ENCODE measurements at regions of chr1 and their contacts with region 1.

Region 1: GRCh38 chr1:205485338-205486228 is 18.9 kb upstream of the CDK18 start:
- DNase-seq: peak; percentile 52 to 85 (median 71)
- H3K4me3 ChIP-seq: no peak overlapping the region
- H3K4me3 Mint-ChIP-seq: peak overlapping the region in 1 of 7 donors; percentile 4
- H3K27ac ChIP-seq: no peak overlapping the region
- H3K27ac Mint-ChIP-seq: peak overlapping the region in 4 of 8 donors; percentile 44 to 80 (median 48)
- H3K4me1 ChIP-seq: peaks cover 22% of the 10 kb centered on the region
- H3K4me1 Mint-ChIP-seq: peaks cover 44 to 50% (median 49%) of the 10 kb centered on the region in 3 donors
- H3K27me3 ChIP-seq: no peaks in the 10 kb centered on the region
- H3K27me3 Mint-ChIP-seq: peaks cover 2 to 17% of the 10 kb centered on the region in 2 donors

Region 2: DNA sequence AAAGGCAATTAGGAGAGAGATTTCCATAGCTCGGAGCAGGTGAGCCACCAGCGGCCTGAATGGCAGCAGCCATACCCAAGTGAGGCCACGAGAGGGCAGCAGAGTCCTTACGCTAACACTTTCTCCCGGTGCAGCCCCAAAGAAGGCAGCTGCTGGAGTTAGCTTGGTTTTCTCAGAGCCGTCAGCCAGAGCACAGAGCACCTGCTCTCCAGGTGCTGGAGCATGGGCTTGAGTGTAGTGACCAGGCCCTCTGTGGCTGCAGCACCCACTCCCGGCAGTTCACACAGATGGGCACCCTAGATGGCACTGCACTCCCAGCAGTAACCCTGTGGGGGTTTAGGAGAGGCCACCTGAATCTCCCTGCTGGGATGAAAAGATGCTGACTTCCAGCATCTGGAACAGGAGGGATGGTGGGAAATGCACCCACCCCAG is 212.0 kb before region 1 on chr1:
- CTCF ChIA-PET with region 1: interaction called, 12 read pairs
- POLR2A ChIA-PET with region 1: no interaction called
- DNase-seq: peak; percentile 74 to 87 (median 76)
- H3K4me3 ChIP-seq: peak overlapping the region; percentile 33
- H3K4me3 Mint-ChIP-seq: peak overlapping the region; percentile 33 to 79 (median 56)
- H3K27ac ChIP-seq: no peak overlapping the region
- H3K27ac Mint-ChIP-seq: peak overlapping the region in 5 of 8 donors; percentile 14 to 75 (median 71)
- H3K4me1 ChIP-seq: peaks cover 40% of the 10 kb centered on the region
- H3K4me1 Mint-ChIP-seq: peaks cover 23 to 45% (median 31%) of the 10 kb centered on the region in 3 donors
- H3K27me3 ChIP-seq: no peaks in the 10 kb centered on the region
- H3K27me3 Mint-ChIP-seq: peaks cover 0 to 2% of the 10 kb centered on the region in 2 donors

Region 3: DNA sequence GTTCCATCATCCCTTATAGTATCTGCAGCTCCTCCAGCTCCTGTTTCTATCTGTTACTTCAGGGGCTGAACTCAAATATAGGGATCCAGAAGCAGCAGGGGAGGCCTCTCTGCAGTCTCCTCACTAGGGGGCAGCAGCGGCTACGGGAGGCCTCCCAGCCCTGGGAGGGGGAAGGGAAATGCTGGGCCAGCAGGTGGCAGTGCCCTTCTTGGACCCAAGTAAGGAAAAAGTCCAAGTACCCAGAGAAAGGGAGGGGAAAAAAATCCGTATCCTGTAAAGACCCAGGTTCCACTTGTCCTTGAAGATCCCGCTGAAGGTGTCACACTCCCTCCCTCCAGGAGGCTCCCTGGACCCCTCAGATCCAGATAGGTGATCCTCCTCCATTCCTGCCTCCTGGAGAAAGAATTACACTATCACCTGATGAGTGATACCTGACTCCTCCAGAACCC is 149.9 kb before region 1 on chr1:
- CTCF ChIA-PET with region 1: interaction called, 22 read pairs
- POLR2A ChIA-PET with region 1: no interaction called
- DNase-seq: peak; percentile 63 to 83 (median 64)
- H3K4me3 ChIP-seq: no peak overlapping the region
- H3K4me3 Mint-ChIP-seq: no peak overlapping the region
- H3K27ac ChIP-seq: no peak overlapping the region
- H3K27ac Mint-ChIP-seq: no peak overlapping the region
- H3K4me1 ChIP-seq: no peaks in the 10 kb centered on the region
- H3K4me1 Mint-ChIP-seq: peaks cover 0 to 2% (median 0%) of the 10 kb centered on the region in 3 donors
- H3K27me3 ChIP-seq: no peaks in the 10 kb centered on the region
- H3K27me3 Mint-ChIP-seq: peaks cover 0 to 10% of the 10 kb centered on the region in 2 donors

Region 4: GRCh38 chr1:205387845-205388244 is 97.7 kb before region 1 on chr1:
- CTCF ChIA-PET with region 1: interaction called, 12 read pairs
- POLR2A ChIA-PET with region 1: no interaction called
- DNase-seq: no peak
- H3K4me3 ChIP-seq: no peak overlapping the region
- H3K4me3 Mint-ChIP-seq: no peak overlapping the region
- H3K27ac ChIP-seq: no peak overlapping the region
- H3K27ac Mint-ChIP-seq: no peak overlapping the region
- H3K4me1 ChIP-seq: no peaks in the 10 kb centered on the region
- H3K4me1 Mint-ChIP-seq: no peaks in the 10 kb centered on the region
- H3K27me3 ChIP-seq: peaks cover 6% of the 10 kb centered on the region
- H3K27me3 Mint-ChIP-seq: peaks cover 12 to 43% of the 10 kb centered on the region in 2 donors

Region 5: DNA sequence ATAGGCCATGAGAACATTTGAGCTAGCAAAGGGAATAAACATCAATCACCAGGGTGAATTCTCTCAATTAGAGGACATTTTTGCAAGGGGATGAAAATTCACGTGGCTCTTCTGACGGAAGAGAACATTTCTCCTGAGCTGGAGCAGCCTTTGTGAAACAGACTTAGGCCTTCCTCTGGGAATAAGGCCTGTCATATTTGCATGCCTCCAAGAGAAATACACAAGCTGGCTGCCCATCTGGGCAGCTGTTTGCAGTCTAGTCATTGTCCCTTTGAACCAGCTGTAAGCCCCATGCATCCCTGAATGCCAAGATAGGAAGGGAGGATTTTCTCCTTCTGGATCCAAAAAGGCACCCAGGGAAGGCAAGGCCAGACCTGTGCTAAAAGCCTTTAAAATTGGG is 69.3 kb before region 1 on chr1:
- CTCF ChIA-PET with region 1: interaction called, 14 read pairs
- POLR2A ChIA-PET with region 1: no interaction called
- DNase-seq: no peak
- H3K4me3 ChIP-seq: no peak overlapping the region
- H3K4me3 Mint-ChIP-seq: no peak overlapping the region
- H3K27ac ChIP-seq: no peak overlapping the region
- H3K27ac Mint-ChIP-seq: peak overlapping the region in 1 of 8 donors; percentile 21
- H3K4me1 ChIP-seq: no peaks in the 10 kb centered on the region
- H3K4me1 Mint-ChIP-seq: no peaks in the 10 kb centered on the region
- H3K27me3 ChIP-seq: no peaks in the 10 kb centered on the region
- H3K27me3 Mint-ChIP-seq: peaks cover 3 to 10% of the 10 kb centered on the region in 2 donors

Region 6: DNA sequence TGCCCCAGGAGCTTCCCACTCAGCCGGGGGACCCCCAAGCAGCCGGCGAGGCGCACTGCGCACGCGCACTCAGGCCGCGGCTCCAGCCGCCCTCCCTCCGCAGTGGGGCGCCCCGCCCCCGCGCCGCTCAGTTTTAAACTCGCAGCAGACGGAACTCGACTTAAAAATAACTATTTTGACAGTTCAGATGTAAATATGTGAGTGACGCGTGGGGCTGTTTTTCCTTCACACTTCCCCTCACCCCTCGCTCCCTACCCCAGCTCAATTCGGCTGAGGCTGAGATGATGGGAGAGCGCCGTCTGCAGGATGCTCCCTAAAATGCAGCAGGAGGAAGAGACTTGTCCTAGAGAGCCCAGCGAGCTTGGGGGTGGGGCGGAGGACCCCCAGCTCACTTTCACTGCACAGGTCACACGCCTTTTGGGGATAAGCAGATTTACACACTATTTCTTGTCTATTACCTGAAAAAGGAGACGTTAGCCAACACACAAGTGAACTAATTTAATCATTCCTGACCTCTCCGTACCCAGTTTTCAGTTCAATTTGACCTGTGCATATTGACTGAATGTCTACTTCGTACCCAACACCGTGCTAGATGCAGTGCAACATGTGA is 54.8 kb before region 1 on chr1:
- CTCF ChIA-PET with region 1: interaction called, 34 read pairs
- POLR2A ChIA-PET with region 1: interaction called, 3 read pairs
- DNase-seq: peak; percentile 42 to 76 (median 55)
- H3K4me3 ChIP-seq: peak overlapping the region; percentile 52
- H3K4me3 Mint-ChIP-seq: peak overlapping the region; percentile 72 to 91 (median 84)
- H3K27ac ChIP-seq: no peak overlapping the region
- H3K27ac Mint-ChIP-seq: peak overlapping the region in 6 of 8 donors; percentile 42 to 87 (median 64)
- H3K4me1 ChIP-seq: peaks cover 5% of the 10 kb centered on the region
- H3K4me1 Mint-ChIP-seq: peaks cover 11 to 19% (median 14%) of the 10 kb centered on the region in 3 donors
- H3K27me3 ChIP-seq: no peaks in the 10 kb centered on the region
- H3K27me3 Mint-ChIP-seq: peaks cover 8 to 13% of the 10 kb centered on the region in 2 donors

Region 7: GRCh38 chr1:205458777-205459566 is 26.6 kb before region 1 on chr1:
- CTCF ChIA-PET with region 1: interaction called, 24 read pairs
- POLR2A ChIA-PET with region 1: interaction called, 4 read pairs
- DNase-seq: peak in 1 of 5 donors; percentile 56
- H3K4me3 ChIP-seq: no peak overlapping the region
- H3K4me3 Mint-ChIP-seq: peak overlapping the region in 1 of 7 donors; percentile 62
- H3K27ac ChIP-seq: no peak overlapping the region
- H3K27ac Mint-ChIP-seq: no peak overlapping the region
- H3K4me1 ChIP-seq: peaks cover 16% of the 10 kb centered on the region
- H3K4me1 Mint-ChIP-seq: peaks cover 17 to 24% (median 17%) of the 10 kb centered on the region in 3 donors
- H3K27me3 ChIP-seq: peaks cover 24% of the 10 kb centered on the region
- H3K27me3 Mint-ChIP-seq: peaks cover 31 to 50% of the 10 kb centered on the region in 2 donors

Region 8: GRCh38 chr1:205840146-205840923 is 354.8 kb after region 1 on chr1:
- CTCF ChIA-PET with region 1: no interaction called
- POLR2A ChIA-PET with region 1: no interaction called
- DNase-seq: no peak
- H3K4me3 ChIP-seq: no peak overlapping the region
- H3K4me3 Mint-ChIP-seq: no peak overlapping the region
- H3K27ac ChIP-seq: no peak overlapping the region
- H3K27ac Mint-ChIP-seq: peak overlapping the region in 1 of 8 donors; percentile 28
- H3K4me1 ChIP-seq: no peaks in the 10 kb centered on the region
- H3K4me1 Mint-ChIP-seq: no peaks in the 10 kb centered on the region
- H3K27me3 ChIP-seq: no peaks in the 10 kb centered on the region
- H3K27me3 Mint-ChIP-seq: peaks cover 0 to 1% of the 10 kb centered on the region in 2 donors